T-cell (primary cell): ENCODE measurements at regions of chr12 and their contacts with region 1.

Region 1: DNA sequence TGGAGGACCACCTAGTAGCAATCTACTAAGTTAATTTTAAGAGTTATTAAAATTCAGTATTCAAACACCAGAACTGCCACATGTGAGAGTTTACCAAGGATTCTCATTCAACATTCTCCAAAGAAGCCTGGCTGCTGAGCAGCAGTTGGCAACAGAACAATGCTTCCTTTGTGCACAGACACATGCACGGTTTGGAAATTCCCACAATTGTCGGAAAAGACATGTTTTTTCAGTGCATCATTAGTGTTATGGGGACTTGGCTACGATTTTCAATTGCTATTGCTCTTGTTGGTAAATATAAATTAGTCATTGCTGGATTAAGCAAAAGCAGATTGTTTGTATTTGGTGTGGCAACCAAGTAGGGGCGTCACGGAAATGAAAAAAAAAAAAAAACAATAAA is 22.2 kb downstream of the ST8SIA1 start:
- DNase-seq: no peak
- ATAC-seq: no peak
- H3K4me3 ChIP-seq: no peak overlapping the region
- H3K4me3 Mint-ChIP-seq: no peak overlapping the region
- H3K27ac ChIP-seq: no peak overlapping the region
- H3K27ac Mint-ChIP-seq: no peak overlapping the region
- H3K4me1 ChIP-seq: no peaks in the 10 kb centered on the region
- H3K4me1 Mint-ChIP-seq: peaks cover 9 to 23% (median 13%) of the 10 kb centered on the region in 3 donors
- H3K27me3 ChIP-seq: no peaks in the 10 kb centered on the region
- H3K27me3 Mint-ChIP-seq: peaks cover 0 to 12% of the 10 kb centered on the region in 2 donors

Region 2: DNA sequence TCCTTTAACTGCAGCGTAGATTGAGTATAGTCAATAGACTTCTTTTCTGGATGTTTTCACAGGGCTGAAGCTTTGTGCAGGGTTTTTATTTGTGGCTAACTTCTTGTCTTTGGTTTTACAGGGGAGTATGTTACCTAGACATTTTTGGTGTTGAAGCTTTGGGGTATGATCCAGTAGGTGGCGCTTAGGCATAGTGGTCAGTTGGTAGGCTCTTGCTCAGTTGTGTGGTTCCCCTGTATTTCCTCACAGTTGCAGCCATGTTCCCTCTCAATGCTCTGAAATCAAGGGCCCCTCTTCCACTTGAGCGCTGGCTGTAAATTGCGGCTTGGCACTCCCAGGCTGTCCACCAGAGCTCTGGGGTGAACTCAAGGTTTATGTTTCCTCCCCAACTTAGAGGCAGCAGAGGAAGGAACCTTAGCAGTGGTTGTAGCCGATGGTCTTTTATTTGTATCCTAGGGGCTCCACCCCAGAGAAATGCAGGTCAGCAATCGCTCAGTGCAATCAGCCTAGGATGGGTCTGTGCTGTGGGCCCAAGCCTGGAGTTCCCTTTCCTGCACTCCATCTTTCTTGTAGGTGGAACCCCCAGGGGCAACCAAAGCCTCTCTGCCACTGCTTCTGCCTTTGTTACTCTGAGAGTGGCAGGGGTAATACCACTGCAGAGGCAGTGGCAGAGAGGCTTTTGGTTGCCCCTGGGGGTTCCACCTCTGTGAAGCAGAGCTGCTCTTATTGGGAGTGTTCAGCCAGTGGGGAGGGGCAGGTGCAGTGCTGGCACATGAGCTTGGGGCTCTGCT is 211.2 kb before region 1 on chr12:
- CTCF ChIA-PET with region 1: interaction called in 1 of 2 experiments, 10 read pairs
- POLR2A ChIA-PET with region 1: no interaction called
- DNase-seq: peak in 21 of 35 experiments; percentile 3 to 71 (median 22)
- ATAC-seq: peak in 3 of 4 experiments; percentile 50 to 71 (median 64)
- H3K4me3 ChIP-seq: no peak overlapping the region
- H3K4me3 Mint-ChIP-seq: no peak overlapping the region
- H3K27ac ChIP-seq: no peak overlapping the region
- H3K27ac Mint-ChIP-seq: no peak overlapping the region
- H3K4me1 ChIP-seq: peaks cover 2 to 16% of the 10 kb centered on the region in 2 experiments
- H3K4me1 Mint-ChIP-seq: peaks cover 0 to 15% (median 12%) of the 10 kb centered on the region in 3 donors
- H3K27me3 ChIP-seq: peaks cover 0 to 11% of the 10 kb centered on the region in 2 experiments
- H3K27me3 Mint-ChIP-seq: no peaks in the 10 kb centered on the region

Region 3: GRCh38 chr12:22287776-22288621 is 24.3 kb before region 1 on chr12:
- CTCF ChIA-PET with region 1: no interaction called
- POLR2A ChIA-PET with region 1: no interaction called
- DNase-seq: peak in 12 of 35 experiments; percentile 2 to 28 (median 7)
- ATAC-seq: peak; percentile 74 to 88 (median 80)
- H3K4me3 ChIP-seq: no peak overlapping the region
- H3K4me3 Mint-ChIP-seq: peak overlapping the region; percentile 13 to 60 (median 22)
- H3K27ac ChIP-seq: no peak overlapping the region
- H3K27ac Mint-ChIP-seq: peak overlapping the region; percentile 13 to 17
- H3K4me1 ChIP-seq: peaks cover 3 to 12% of the 10 kb centered on the region in 2 experiments
- H3K4me1 Mint-ChIP-seq: peaks cover 27 to 30% (median 27%) of the 10 kb centered on the region in 3 donors
- H3K27me3 ChIP-seq: no peaks in the 10 kb centered on the region
- H3K27me3 Mint-ChIP-seq: no peaks in the 10 kb centered on the region